GM10248 (cell line): ENCODE measurements at regions of chr5 and their contacts with region 1.

Region 1: DNA sequence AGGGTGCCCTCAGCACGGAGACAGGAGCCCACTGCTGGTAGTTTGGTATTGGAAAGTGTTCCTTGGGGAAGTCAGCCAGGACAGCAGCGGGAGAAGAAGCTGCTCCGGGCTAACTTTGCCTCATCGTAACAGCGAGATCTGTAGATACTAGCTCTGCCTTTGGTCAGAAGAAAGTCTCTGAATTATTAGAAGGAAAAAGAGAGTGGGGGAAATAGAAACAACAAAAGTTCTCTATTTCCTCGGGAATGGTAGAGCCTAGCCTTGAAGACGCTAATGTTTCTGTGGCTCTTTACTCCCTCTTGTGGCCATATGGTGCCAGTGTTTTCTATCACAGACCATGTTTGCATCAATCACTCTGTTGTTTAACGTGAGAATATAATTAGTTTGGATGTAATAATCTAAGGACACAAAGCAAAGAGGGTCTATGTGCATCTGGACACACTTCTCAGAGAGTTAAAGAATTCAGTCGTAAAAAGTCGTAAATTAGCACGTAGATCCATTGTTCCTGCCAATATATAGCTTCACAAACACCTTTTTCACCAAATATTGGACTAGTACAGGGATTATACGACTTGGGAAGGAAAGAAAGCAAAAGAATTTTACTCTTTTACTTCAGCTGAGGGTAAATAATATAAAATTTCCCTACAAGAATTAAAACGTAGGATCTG is 40.2 kb upstream of the HSD17B4 start:
- DNase-seq: peak; percentile 45
- CTCF ChIP-seq: peak; percentile 91

Region 2: GRCh38 chr5:118450924-118451332 is 961.1 kb before region 1 on chr5:
- CTCF ChIA-PET with region 1: no interaction called
- POLR2A ChIA-PET with region 1: no interaction called
- DNase-seq: no peak
- CTCF ChIP-seq: no peak

Region 3: DNA sequence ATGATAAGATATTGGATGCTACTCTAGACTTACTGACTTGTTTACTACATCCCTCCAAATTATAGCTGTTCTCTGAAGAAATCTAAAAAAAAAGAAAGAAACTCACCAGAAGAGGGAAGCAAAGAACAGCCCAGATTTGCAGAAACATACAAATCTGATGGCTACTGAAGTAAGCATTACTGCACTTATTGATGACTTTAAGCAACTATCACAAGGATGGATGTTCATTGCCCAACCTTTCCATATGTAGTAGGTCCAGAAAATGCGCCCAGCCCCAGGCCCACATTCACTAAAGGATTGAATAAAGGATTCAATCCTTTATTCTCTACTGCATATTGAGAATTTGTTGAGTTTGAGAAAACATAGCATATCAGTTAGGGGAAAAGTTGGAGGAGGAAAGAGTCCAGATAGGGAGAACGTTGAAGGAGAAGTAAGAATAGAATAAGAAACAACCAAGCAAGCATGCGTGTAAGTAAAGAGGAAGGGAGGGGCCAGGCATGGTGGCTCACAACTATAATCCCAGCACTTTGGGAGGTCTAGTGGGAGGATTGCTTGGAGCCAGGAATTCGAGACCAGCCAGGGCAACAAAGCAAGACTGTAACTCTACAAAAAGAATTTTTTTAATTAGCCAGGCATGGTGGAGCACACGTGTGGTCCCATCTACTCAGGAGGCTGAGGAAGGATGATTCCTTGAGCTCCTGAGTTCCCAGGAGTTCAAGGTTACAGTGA is 389.9 kb before region 1 on chr5:
- CTCF ChIA-PET with region 1: interaction called, 31 read pairs
- POLR2A ChIA-PET with region 1: no interaction called
- DNase-seq: peak; percentile 38
- CTCF ChIP-seq: peak; percentile 48

Region 4: GRCh38 chr5:119267958-119268386 is 144.1 kb before region 1 on chr5:
- CTCF ChIA-PET with region 1: interaction called, 35 read pairs
- POLR2A ChIA-PET with region 1: no interaction called
- DNase-seq: peak; percentile 83
- CTCF ChIP-seq: peak; percentile 81

Region 5: GRCh38 chr5:119355685-119356611 is 56.1 kb before region 1 on chr5 and contains the start of gene TNFAIP8:
- CTCF ChIA-PET with region 1: interaction called, 26 read pairs
- POLR2A ChIA-PET with region 1: no interaction called
- DNase-seq: peak; percentile 81
- CTCF ChIP-seq: no peak

Region 6: DNA sequence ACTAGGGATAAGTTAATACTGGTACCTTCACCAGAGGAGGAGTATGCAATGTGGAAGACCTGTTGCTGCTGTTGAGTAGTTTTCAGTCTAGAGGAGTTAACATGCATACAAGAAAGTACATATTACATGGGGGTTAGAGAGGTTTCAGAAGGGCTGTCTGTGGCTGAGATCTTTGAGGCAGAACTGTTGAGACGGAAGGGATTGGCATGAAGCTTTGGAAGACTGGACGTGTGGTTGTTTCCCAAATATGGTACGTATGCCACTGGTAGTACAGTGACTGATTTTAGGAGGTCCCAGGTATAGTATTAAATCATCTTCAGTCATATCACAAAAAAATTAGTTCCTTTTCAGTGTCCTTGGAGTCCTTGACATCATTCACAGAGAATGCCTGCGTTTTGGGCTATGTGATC is 38.6 kb before region 1 on chr5:
- CTCF ChIA-PET with region 1: interaction called, 31 read pairs
- POLR2A ChIA-PET with region 1: no interaction called
- DNase-seq: no peak
- CTCF ChIP-seq: no peak

Region 7: DNA sequence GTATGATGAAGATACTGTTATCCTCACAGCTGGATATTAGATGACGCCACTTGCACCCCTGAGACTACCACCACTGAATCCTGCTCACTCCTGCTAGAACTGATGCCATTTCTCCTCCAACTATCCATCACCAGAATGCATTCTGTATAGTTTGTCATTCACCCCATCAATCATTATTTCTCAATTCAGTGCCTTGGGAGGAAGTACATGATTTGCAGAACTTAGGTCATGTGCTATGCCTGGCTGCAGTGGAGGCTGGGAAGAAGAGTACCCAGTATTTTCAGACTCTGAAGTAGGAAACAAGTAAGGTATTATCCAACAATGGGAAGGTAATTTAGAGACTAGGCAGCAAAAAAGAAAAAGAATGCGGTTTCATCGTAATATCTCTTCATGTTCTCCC is 14.0 kb after region 1 on chr5:
- CTCF ChIA-PET with region 1: interaction called, 60 read pairs
- POLR2A ChIA-PET with region 1: no interaction called
- DNase-seq: no peak
- CTCF ChIP-seq: no peak

Region 8: DNA sequence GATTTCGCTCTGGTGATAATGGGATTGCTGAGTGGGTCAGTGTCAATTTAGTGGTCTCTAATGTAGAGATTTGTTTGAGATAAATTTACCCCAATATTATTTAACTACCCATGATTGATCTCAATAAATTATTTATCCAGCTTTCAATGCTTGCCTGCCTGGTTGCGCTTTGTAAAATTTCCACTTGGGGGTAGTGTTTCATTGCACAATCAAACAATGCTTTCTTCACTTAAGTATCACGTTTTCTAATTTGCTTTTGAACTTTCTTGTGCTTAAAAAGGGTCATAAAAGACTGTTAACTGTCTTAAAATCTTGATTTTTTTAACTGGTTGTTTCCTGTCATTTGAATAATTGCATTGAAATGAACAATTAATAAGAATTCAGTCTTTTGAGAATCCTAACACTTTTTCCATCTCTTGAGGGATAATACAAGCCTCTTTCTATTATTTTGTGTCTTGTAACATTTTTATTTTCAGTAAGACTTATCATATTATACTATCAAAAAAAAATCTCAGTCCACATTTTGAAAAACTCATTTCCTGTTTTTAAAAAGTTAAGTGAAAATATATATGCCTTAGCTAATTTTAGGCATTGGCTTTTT is 58.9 kb after region 1 on chr5:
- CTCF ChIA-PET with region 1: no interaction called
- POLR2A ChIA-PET with region 1: no interaction called
- DNase-seq: peak; percentile 13
- CTCF ChIP-seq: peak; percentile 58